ENCODE measurements at regions of chr19 and their contacts with region 1.

Region 1: DNA sequence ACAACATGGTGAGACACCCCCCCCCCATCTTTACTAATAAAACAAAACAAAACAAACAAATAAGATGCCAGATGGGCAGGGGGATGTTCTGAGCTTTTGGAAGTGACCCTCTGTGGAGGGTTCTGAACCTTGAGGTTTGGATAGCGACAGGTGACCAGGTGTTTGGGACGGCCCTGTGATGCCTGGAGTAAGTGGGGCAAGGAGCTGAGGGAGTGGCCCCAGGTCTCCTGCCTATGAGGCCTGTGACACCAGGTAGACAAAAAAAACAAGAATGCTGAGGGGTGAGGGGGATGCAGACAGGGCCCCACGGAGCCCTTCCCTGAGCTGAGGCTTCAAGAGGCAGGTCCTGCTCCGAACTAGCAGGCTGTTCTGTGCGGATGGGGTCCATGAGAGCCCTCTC is 9.2 kb downstream of the ADGRE2 start:
- DNase-seq: no peak
- H3K4me3 ChIP-seq: no peak overlapping the region
- H3K27ac ChIP-seq: no peak overlapping the region
- H3K4me1 ChIP-seq: no peaks in the 10 kb centered on the region
- H3K27me3 ChIP-seq: no peaks in the 10 kb centered on the region
- CTCF ChIP-seq: no peak

Region 2: DNA sequence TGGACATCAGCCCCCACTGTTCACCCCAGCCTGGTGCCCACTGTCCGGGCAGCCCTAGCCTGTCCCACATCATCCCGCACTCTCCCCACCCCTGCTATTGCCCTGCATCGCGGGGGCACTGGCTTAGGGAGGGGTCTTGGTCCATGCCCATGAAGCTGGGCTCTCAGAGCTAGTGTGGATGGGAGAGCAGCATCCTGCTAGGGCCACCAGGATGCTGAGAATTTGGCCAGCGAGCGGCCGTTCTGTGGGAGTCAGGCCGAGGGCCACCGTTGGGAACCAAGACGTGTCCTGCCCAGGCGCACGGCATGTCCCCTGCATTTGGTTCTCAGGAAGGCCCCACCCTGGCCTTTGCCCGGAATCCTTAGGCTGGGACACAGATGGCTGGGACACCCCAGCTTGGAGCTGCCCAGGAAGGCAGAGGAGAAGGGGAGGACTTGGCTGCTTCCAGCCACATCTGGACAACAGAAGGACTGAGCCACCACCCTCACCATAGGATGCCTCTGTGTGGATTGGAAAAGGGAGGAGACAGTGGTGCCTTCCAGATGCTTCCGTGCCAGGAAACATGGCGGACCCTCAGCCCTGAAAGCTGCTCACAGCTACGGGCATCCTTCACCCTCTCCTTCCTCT is 373.4 kb before region 1 on chr19:
- CTCF ChIA-PET with region 1: no interaction called
- dilution Hi-C with region 1: no loop called
- in situ Hi-C with region 1: loop called in 1 of 2 experiments (anchors 5 kb)
- intact Hi-C with region 1: no loop called
- DNase-seq: no peak
- H3K4me3 ChIP-seq: no peak overlapping the region
- H3K27ac ChIP-seq: no peak overlapping the region
- H3K4me1 ChIP-seq: no peaks in the 10 kb centered on the region
- H3K27me3 ChIP-seq: no peaks in the 10 kb centered on the region
- CTCF ChIP-seq: no peak

Region 3: GRCh38 chr19:14529254-14530004 is 239.8 kb before region 1 on chr19 and contains the start of gene TECR:
- CTCF ChIA-PET with region 1: no interaction called
- dilution Hi-C with region 1: no loop called
- in situ Hi-C with region 1: no loop called
- intact Hi-C with region 1: no loop called
- DNase-seq: peak; percentile 100
- H3K4me3 ChIP-seq: peak within 1 kb of the TSS; percentile 78 to 94 (median 89)
- H3K27ac ChIP-seq: peak within 1 kb of the TSS; percentile 97
- H3K4me1 ChIP-seq: peaks cover 44% of the 10 kb centered on the region
- H3K27me3 ChIP-seq: no peaks in the 10 kb centered on the region
- CTCF ChIP-seq: peak in 1 of 2 donors; percentile 4
- total RNA-seq, gene TECR: 68.0 to 168 TPM

Measured in mammary epithelial cell (primary cell).